ENCODE measurements at regions of chr5 and their contacts with region 1.

Region 1: DNA sequence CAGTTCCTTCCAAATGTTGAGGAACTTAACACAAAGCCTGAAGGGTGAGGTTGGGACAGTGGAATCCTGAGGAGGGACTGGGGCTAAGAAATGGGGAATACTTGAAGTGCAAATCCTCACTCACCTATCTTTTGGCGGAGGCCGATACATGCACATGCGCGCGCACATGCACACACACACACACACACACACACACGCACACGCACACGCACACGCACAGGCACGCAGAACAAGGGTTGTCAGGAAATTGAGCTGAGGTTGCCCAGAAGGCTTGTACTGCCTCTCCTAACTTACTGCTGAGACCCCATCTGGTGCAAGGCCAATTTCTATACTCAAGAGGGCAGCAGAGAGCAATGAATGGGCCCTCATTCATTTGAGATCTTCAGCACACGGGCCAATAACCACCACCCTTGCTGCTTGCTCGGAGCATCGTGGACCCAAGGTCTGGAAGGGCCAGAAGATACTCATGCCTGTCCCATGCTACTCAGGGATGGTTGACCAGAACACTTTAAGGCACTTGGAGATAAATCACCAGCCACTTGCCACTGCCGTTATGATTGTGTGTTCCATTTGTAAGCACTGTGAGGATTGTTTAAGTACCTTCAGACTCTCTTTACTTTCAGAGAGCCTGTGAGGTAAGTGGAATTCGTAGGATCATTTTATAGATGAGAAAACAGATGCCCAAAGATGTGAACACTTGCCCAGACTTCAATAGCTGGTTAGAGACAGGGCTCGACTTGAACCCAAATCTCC is 21.5 kb downstream of the BTF3 start:
- DNase-seq: peak; percentile 86
- ATAC-seq: peak; percentile 100
- H3K4me3 Mint-ChIP-seq: peak overlapping the region; percentile 40
- H3K27ac Mint-ChIP-seq: peak overlapping the region; percentile 54
- H3K4me1 Mint-ChIP-seq: peaks cover 6% of the 10 kb centered on the region
- H3K27me3 Mint-ChIP-seq: no peaks in the 10 kb centered on the region

Region 2: DNA sequence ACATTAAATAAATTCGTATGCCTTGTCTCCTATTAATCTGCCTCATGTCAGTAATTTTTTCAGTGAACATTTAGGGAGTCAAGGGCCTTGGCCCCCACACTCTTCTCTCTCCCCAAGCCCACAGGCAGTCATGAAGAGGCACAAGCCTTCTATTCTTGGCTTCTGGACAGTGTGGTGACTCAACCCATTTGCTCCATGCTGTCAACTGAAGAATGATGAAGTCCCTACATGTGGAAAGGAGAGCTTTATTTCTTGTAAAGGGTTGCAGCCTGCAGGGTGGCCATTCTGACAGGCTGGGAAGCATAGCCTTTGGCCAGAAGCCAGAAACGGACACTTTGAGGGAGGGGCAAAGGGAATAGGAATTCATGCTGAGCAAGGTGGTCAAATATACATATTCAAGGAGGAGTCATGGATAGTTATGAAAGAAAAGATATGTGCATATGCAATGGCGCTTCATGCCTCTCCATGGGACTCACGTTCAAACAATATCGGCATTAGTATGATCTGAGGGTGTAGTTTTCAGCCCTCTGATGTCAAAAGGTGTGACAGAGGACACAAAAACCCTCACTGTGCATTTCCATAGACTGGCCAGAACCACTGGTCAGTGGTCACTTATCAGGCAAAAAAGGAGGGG is 14.4 kb after region 1 on chr5:
- CTCF ChIA-PET with region 1: interaction called, 81 read pairs
- POLR2A ChIA-PET with region 1: no interaction called
- DNase-seq: no peak
- ATAC-seq: no peak
- H3K4me3 Mint-ChIP-seq: no peak overlapping the region
- H3K27ac Mint-ChIP-seq: no peak overlapping the region
- H3K4me1 Mint-ChIP-seq: no peaks in the 10 kb centered on the region
- H3K27me3 Mint-ChIP-seq: peaks cover 27% of the 10 kb centered on the region

Region 3: DNA sequence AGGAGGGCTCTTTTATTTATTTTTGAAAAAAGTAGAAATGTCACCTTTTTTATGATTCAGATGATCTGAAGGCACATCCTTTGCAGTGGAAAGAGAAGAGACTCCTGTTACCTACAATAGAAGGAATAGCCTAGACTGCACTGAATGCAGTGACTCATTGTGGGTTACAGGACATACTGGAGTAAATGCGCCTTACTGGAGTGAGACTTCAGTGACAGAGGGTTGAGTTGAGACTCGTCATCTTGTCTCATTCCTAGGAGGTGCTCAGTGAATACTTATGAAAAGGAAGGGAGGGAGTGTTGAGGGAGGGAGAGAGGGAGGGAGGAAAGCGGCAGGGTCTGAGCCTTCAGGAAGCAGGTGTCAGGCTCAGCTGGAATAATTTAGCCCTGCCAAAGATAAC is 20.5 kb after region 1 on chr5:
- CTCF ChIA-PET with region 1: interaction called, 81 read pairs
- POLR2A ChIA-PET with region 1: no interaction called
- DNase-seq: no peak
- ATAC-seq: no peak
- H3K4me3 Mint-ChIP-seq: no peak overlapping the region
- H3K27ac Mint-ChIP-seq: no peak overlapping the region
- H3K4me1 Mint-ChIP-seq: no peaks in the 10 kb centered on the region
- H3K27me3 Mint-ChIP-seq: peaks cover 17% of the 10 kb centered on the region

Measured in activated CD8-positive, alpha-beta T cell treated with anti-CD3 and anti-CD28 coated beads, Interleukin-2, amount 10 ng/mL, durations not matched to agents 7 days and 5 days (primary cell).